Activated CD4-positive, alpha-beta memory T cell treated with anti-CD3 and anti-CD28 coated beads for 36 hours (primary cell): ENCODE measurements at regions of chr10 and their contacts with region 1.

Region 1: GRCh38 chr10:68331455-68332258 is at the start of gene HNRNPH3:
- DNase-seq: peak; percentile 99
- H3K4me3 Mint-ChIP-seq: peak within 1 kb of the TSS; percentile 100
- H3K27ac Mint-ChIP-seq: peak within 1 kb of the TSS; percentile 100
- H3K4me1 Mint-ChIP-seq: peaks cover 34% of the 10 kb centered on the region
- H3K27me3 Mint-ChIP-seq: peaks cover 3% of the 10 kb centered on the region
- total RNA-seq, gene HNRNPH3: 140 to 144 TPM

Region 2: DNA sequence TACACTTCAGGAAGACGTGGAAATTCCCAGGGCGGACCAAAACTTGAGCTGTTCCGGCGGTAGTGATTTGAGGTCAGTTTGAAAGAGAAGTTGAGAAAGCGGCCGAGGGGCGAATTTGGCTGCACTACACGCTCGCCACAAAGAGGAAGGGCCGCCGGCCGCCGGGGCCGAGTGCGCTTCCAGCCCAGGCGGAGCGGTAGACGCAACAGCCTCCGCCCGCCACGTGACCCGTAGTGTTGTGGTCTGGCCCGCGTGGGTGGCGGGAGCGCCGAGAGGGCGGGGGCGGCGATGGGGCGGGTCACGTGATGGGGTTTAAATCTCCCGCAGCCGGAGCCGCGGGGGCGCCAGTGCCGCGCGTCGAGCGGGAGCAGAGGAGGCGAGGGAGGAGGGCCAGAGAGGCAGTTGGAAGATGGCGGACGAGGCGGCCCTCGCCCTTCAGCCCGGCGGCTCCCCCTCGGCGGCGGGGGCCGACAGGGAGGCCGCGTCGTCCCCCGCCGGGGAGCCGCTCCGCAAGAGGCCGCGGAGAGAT is 447.3 kb before region 1 on chr10 and contains the start of gene SIRT1:
- CTCF ChIA-PET with region 1: no interaction called
- POLR2A ChIA-PET with region 1: interaction called, 4 read pairs
- intact Hi-C with region 1: loop called (anchors 2 kb)
- DNase-seq: peak; percentile 93
- H3K4me3 Mint-ChIP-seq: peak within 1 kb of the TSS; percentile 93
- H3K27ac Mint-ChIP-seq: peak within 1 kb of the TSS; percentile 88
- H3K4me1 Mint-ChIP-seq: peaks cover 28% of the 10 kb centered on the region
- H3K27me3 Mint-ChIP-seq: no peaks in the 10 kb centered on the region
- total RNA-seq, gene SIRT1: 29.9 to 32.0 TPM

Region 3: GRCh38 chr10:68348265-68348741 is 16.6 kb after region 1 on chr10:
- CTCF ChIA-PET with region 1: interaction called, 14 read pairs
- POLR2A ChIA-PET with region 1: interaction called, 5 read pairs
- intact Hi-C with region 1: loop called (anchors 1 kb)
- DNase-seq: peak; percentile 58
- H3K4me3 Mint-ChIP-seq: no peak overlapping the region
- H3K27ac Mint-ChIP-seq: peak overlapping the region; percentile 29
- H3K4me1 Mint-ChIP-seq: peaks cover 10% of the 10 kb centered on the region
- H3K27me3 Mint-ChIP-seq: no peaks in the 10 kb centered on the region

Region 4: GRCh38 chr10:68516766-68517165 is 185.1 kb after region 1 on chr10:
- CTCF ChIA-PET with region 1: no interaction called
- POLR2A ChIA-PET with region 1: no interaction called
- intact Hi-C with region 1: no loop called
- DNase-seq: no peak
- H3K4me3 Mint-ChIP-seq: no peak overlapping the region
- H3K27ac Mint-ChIP-seq: no peak overlapping the region
- H3K4me1 Mint-ChIP-seq: peaks cover 4% of the 10 kb centered on the region
- H3K27me3 Mint-ChIP-seq: no peaks in the 10 kb centered on the region

Region 5: DNA sequence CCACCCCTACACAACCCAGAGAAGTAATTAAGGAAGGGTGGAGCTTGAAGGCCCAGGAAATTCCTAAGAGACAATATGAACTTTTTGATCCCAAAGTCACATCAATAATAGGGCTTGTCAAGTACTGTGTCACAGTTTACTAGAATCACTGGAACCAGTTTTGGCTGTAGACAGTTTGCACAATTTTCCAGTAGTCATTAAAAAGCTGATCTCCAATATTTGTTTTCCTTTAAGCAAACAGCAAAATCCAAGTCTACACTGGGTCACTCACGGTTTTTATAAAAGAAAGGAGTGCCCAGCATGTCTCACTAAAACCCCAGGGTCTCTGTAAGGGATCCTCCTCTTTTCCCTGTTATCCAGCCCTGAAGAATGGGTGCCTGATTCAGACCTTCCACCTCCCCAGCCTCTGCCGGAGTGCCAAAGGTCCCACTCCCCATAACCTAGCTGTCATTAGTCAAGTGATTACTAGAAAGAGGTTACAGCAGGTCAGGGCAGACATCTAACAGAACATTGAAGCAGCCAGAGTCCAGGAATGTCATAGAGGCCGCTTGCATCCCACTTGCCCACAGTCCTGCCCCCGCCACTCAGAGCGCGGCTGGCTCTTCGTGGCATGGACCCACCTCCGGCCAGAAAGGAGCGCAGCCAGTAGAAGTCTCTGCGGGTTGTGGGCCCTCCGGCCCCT is 195.1 kb after region 1 on chr10:
- CTCF ChIA-PET with region 1: no interaction called
- POLR2A ChIA-PET with region 1: no interaction called
- intact Hi-C with region 1: loop called (anchors 2 kb)
- DNase-seq: no peak
- H3K4me3 Mint-ChIP-seq: peak overlapping the region; percentile 90
- H3K27ac Mint-ChIP-seq: peak overlapping the region; percentile 77
- H3K4me1 Mint-ChIP-seq: peaks cover 9% of the 10 kb centered on the region
- H3K27me3 Mint-ChIP-seq: no peaks in the 10 kb centered on the region

Region 6: GRCh38 chr10:68955832-68956532 is 624.3 kb after region 1 on chr10 and contains the start of gene DDX21:
- CTCF ChIA-PET with region 1: interaction called, 3 read pairs
- POLR2A ChIA-PET with region 1: interaction called, 4 read pairs
- intact Hi-C with region 1: loop called (anchors 5 kb)
- DNase-seq: peak; percentile 94
- H3K4me3 Mint-ChIP-seq: peak within 1 kb of the TSS; percentile 97
- H3K27ac Mint-ChIP-seq: peak within 1 kb of the TSS; percentile 99
- H3K4me1 Mint-ChIP-seq: peaks cover 39% of the 10 kb centered on the region
- H3K27me3 Mint-ChIP-seq: no peaks in the 10 kb centered on the region
- total RNA-seq, gene DDX21: 156 to 158 TPM